ENCODE measurements at regions of chr16 and their contacts with region 1.

Region 1: DNA sequence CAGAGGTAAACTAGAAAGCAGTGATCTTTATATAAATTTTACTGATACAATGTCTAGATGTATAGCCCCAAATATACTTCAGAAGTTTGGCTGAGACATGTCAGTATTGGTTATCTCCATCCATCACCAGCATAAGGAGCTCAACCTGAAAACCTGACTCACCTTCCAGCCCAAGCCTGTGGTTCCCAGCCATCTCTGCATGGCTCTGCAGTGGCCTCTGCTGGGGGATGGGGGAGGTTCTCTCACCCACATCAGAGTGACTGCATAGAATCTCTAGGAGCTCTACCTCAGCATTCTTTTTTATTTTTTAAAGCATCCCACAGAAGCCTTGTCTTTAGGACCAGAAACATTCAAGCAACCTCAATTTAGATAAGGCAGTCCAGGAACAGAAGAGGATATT is 27.3 kb downstream of the USP7 start:
- DNase-seq: peak; percentile 92
- H3K4me3 Mint-ChIP-seq: no peak overlapping the region
- H3K27ac Mint-ChIP-seq: peak overlapping the region; percentile 66
- H3K4me1 Mint-ChIP-seq: peaks cover 80% of the 10 kb centered on the region
- H3K27me3 Mint-ChIP-seq: no peaks in the 10 kb centered on the region

Region 2: DNA sequence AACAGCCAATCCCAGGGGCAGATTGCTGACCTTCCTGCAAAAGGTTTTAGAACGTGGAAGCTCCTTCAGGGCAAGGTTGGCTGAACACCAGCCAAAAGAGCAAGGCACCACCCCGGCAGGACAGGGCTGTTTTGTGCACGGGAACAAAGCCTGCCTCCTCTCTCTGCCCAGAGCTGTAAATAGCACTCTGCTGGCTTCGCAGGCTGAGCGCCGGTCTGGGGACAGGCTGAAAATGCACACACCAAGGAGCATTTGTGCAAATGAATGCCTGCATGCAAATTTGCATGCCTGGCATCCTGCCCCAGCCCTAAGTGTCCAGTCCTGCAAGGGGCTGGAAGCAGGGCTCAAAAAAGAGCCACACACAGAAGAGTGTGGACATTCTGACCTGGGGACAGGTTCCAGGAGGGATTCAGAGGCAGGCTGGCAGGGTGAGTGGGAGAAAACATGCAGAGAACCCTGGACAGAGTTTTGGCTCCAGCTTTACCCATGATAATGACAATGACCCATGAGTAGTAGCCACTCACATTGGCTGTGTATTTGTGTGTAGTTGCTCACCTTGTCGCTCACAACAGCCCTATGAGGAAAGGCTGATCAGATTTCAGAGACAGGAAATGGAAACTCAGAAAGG is 250.3 kb before region 1 on chr16:
- CTCF ChIA-PET with region 1: no interaction called
- POLR2A ChIA-PET with region 1: no interaction called
- intact Hi-C with region 1: no loop called
- DNase-seq: no peak
- H3K4me3 Mint-ChIP-seq: no peak overlapping the region
- H3K27ac Mint-ChIP-seq: no peak overlapping the region
- H3K4me1 Mint-ChIP-seq: no peaks in the 10 kb centered on the region
- H3K27me3 Mint-ChIP-seq: no peaks in the 10 kb centered on the region

Region 3: GRCh38 chr16:8885674-8886592 is 50.5 kb before region 1 on chr16:
- CTCF ChIA-PET with region 1: interaction called, 51 read pairs
- POLR2A ChIA-PET with region 1: interaction called, 3 read pairs
- intact Hi-C with region 1: no loop called
- DNase-seq: peak; percentile 26
- H3K4me3 Mint-ChIP-seq: no peak overlapping the region
- H3K27ac Mint-ChIP-seq: no peak overlapping the region
- H3K4me1 Mint-ChIP-seq: peaks cover 20% of the 10 kb centered on the region
- H3K27me3 Mint-ChIP-seq: peaks cover 3% of the 10 kb centered on the region

Region 4: DNA sequence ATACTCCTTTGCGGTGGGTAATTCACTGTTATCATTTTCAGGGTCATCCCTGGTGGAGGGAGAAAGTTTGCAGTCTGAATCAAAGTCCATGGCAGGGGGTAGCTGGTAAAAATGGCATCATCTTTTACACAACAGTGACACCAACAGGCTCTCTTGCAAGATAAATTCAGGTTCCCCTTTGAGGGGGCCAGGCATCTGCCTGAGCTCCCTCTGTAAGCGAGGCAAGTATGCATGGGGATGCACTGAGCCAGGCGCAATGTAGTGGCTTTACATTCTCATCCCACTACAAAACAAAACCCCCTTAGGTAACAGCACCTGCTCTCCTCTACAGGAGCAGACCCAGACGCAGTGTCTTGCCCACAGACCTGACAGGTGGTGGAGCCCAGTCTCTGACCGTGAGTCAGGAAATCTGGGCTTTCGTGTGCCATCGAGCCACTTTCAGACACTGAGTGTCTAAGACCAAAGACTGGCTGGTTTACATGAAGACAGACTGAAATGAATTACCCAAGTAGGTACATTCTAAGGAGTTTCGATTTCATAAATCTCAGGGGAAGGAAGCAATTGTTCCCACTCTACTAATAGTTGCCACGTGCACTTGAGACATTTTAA is 36.6 kb before region 1 on chr16:
- CTCF ChIA-PET with region 1: interaction called, 51 read pairs
- POLR2A ChIA-PET with region 1: no interaction called
- intact Hi-C with region 1: loop called (anchors 1 kb)
- DNase-seq: no peak
- H3K4me3 Mint-ChIP-seq: no peak overlapping the region
- H3K27ac Mint-ChIP-seq: no peak overlapping the region
- H3K4me1 Mint-ChIP-seq: no peaks in the 10 kb centered on the region
- H3K27me3 Mint-ChIP-seq: no peaks in the 10 kb centered on the region

Region 5: GRCh38 chr16:8920645-8921346 is 15.6 kb before region 1 on chr16:
- CTCF ChIA-PET with region 1: interaction called, 58 read pairs
- POLR2A ChIA-PET with region 1: interaction called, 7 read pairs
- intact Hi-C with region 1: loop called (anchors 1 kb)
- DNase-seq: no peak
- H3K4me3 Mint-ChIP-seq: no peak overlapping the region
- H3K27ac Mint-ChIP-seq: peak overlapping the region; percentile 78
- H3K4me1 Mint-ChIP-seq: peaks cover 74% of the 10 kb centered on the region
- H3K27me3 Mint-ChIP-seq: no peaks in the 10 kb centered on the region

Region 6: DNA sequence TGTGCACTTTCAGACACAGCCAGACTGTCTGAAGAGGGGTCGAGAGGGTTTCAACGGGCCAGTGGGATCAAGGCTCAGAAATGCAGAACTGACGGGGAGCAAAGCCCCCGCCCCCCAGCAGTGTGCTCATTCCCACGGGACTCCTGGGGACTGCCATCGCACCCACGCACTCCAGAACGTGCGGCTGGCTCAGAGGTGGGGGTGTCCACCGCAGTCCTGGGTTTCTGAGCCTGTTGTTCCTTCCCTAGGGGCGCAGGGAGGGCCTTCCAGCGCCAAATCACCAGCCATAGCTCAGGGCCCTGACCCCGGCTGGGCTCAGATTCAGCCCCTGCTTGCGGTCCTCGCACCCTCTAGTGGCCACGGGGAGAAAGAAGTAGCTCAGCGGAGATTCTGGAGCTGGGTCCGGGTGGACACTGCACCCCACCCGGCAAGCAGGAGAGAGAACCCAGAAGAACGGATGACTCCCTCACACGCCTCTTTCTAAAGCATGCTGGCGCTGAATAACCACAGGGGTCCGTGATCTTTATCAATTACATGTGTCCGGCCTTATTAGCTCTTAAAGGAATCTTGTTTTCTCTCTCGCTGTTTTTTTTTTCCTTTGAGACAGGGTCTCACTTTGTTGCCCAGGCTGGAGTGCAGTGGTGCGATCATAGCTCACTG is 72.3 kb after region 1 on chr16:
- CTCF ChIA-PET with region 1: interaction called, 37 read pairs
- POLR2A ChIA-PET with region 1: interaction called, 5 read pairs
- intact Hi-C with region 1: loop called (anchors 5 kb)
- DNase-seq: peak; percentile 78
- H3K4me3 Mint-ChIP-seq: no peak overlapping the region
- H3K27ac Mint-ChIP-seq: no peak overlapping the region
- H3K4me1 Mint-ChIP-seq: peaks cover 4% of the 10 kb centered on the region
- H3K27me3 Mint-ChIP-seq: peaks cover 17% of the 10 kb centered on the region